Left cardiac atrium (tissue), 4 donors: ENCODE measurements at regions of chr1 and their contacts with region 1.

Region 1: DNA sequence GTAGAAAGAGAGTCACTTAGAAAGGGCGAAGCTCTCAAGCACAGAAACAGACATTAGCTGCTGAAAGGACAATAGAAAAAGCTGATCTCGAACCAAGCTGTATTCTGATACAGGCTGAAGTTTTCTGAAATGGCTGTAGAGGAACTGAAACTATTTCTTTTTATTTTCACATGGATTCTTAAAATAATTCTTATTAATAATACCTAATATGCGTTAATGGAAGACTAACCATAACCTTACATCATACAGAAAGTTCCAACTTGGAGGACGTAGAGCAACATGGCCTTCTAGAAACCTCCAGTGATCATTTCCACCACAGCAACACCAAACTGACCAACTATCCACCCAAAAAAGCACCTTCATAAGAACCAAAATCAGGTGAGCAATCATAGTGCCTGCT is 52.8 kb upstream of the ACADM start:
- DNase-seq: no peak
- ATAC-seq: no peak

Region 2: GRCh38 chr1:75690547-75690946 is 18.8 kb after region 1 on chr1:
- intact Hi-C with region 1: loop called in 1 of 2 experiments (anchors 2 kb)
- DNase-seq: no peak
- ATAC-seq: no peak

Region 3: DNA sequence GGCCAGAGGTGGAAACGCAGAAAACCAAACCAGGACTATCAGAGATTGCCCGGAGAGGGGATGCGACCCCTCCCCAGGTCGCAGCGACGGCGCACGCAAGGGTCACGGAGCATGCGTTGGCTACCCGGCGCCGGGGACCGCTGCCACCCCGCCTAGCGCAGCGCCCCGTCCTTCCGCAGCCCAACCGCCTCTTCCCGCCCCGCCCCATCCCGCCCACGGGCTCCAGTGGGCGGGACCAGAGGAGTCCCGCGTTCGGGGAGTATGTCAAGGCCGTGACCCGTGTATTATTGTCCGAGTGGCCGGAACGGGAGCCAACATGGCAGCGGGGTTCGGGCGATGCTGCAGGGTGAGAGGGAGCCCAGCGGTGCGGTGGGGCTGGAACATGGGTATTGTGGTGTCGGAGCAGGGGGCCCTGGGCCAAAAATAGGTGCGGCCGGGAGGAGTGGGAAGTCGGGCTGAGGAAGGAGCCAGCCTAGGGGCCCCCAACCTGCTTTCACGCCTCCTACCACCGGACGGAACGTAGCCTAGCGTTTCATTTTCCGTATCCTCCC is 52.8 kb after region 1 on chr1 and contains the start of gene ACADM:
- intact Hi-C with region 1: no loop called
- DNase-seq: peak; percentile 91
- ATAC-seq: peak; percentile 98 to 99
- total RNA-seq, gene ACADM: 164 to 212 TPM